Sciatic nerve (tissue), 2 donors: ENCODE measurements at regions of chr12 and their contacts with region 1.

Region 1: GRCh38 chr12:85866986-85867776 is 6.9 kb upstream of the NTS start:
- DNase-seq: no peak
- ATAC-seq: peak; percentile 86

Region 2: DNA sequence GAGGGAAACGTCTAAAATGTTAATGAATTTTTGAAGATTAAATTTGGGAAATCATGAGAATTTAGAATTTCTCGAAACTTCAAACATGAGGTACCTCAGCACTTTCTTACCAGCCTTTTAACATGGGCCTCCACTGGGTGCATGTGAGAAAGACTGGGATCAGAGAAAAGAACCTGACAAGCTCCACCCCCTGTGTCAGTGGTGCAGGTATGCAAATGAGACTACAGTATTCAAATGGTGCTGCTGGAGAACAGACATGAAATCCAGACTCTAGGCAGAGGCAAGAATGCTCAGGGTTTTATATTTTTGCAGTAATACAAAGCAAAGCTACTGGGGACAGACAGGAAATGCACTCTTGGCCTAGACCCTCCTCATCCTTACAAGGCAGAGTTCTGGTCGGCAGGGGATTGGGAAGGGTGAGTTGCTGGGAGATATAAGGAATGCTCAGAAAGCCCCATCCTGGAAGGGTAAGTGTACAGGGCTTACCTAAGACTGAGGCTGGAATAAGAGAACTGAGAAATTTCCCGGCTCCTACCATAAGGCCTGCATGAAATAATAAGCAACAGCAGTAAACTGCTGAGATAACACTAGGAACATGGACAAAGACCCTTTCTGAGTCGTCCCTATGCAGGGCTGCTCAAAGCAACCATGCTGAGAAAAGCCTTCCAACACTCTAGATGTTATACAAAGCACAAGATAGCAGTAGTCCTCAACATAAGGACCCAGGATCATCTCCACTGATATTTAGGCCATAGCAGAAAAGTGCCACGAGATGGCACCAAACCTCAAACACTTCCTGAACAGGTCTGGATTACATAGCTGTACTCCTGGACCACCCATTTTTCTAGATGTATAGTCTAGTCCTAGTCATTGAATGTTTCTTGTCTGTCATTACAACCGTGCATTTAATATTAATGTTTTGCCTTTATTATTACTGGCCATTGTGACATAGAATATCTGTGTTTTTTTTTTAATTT is 291.8 kb before region 1 on chr12:
- intact Hi-C with region 1: loop called (anchors 5 kb)
- DNase-seq: peak; percentile 56
- ATAC-seq: peak; percentile 74

Region 3: DNA sequence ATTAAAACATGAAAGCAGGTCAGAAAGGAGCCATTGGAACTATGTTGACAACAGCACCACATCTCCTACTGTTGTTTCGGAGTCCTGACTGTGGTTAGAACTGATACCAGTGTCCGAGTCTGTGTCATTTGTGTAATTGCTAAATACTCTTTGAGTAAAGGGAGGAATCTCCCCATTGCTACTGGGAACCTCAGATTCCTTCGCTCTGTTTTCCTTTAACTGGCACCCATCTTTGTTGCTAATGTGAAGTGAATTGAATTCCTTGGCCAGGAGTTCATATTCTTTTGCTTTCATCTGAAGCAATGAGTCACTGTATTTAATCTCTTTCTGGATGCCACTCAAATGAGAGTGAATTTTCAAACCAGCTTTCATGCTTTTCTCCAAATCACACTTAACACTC is 62.5 kb before region 1 on chr12:
- intact Hi-C with region 1: no loop called
- DNase-seq: no peak
- ATAC-seq: no peak

Region 4: GRCh38 chr12:86950444-86950843 is 1083.3 kb after region 1 on chr12:
- intact Hi-C with region 1: no loop called
- DNase-seq: no peak
- ATAC-seq: no peak